AG04450 (cell line): ENCODE measurements at regions of chr2 and their contacts with region 1.

Region 1: DNA sequence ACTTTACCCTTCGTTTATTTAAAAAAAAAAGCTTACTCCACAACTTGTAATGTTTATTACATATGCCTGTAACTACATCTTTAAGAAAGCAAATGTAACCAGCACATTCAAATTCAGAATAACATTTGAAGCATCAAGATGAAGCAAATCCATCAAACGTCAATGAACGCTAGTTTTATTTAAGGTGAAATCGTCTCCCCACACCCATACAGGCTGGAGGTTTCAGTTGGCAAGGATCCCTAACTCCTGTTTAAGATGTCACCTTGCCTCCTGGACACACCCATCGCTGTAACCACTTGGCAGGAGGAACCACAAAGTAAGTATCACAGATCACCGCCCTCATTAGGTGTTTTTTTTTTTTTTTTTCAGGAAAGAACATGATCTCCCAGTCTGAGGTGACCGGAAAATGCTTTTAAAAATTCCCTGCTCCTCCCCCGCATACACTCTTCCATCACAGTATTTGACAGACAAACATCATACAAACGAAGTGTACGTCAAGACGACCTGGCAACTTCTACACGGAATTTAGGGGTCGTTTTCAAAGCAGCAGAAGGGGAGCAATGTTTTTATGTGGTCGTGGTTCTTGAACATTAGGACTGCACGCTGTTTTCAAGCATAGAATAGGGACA is 19.7 kb upstream of the STPG4 start:
- DNase-seq: no peak
- H3K4me3 ChIP-seq: peak overlapping the region; percentile 98
- H3K27ac ChIP-seq: peak overlapping the region; percentile 67
- H3K27me3 ChIP-seq: no peaks in the 10 kb centered on the region
- CTCF ChIP-seq: no peak

Region 2: GRCh38 chr2:46988733-46989481 is 185.9 kb before region 1 on chr2:
- CTCF ChIA-PET with region 1: interaction called, 16 read pairs
- POLR2A ChIA-PET with region 1: interaction called, 3 read pairs
- DNase-seq: no peak
- H3K4me3 ChIP-seq: no peak overlapping the region
- H3K27ac ChIP-seq: no peak overlapping the region
- H3K27me3 ChIP-seq: no peaks in the 10 kb centered on the region
- CTCF ChIP-seq: peak; percentile 14; the same call in 1 of the 2 replicates

Region 3: DNA sequence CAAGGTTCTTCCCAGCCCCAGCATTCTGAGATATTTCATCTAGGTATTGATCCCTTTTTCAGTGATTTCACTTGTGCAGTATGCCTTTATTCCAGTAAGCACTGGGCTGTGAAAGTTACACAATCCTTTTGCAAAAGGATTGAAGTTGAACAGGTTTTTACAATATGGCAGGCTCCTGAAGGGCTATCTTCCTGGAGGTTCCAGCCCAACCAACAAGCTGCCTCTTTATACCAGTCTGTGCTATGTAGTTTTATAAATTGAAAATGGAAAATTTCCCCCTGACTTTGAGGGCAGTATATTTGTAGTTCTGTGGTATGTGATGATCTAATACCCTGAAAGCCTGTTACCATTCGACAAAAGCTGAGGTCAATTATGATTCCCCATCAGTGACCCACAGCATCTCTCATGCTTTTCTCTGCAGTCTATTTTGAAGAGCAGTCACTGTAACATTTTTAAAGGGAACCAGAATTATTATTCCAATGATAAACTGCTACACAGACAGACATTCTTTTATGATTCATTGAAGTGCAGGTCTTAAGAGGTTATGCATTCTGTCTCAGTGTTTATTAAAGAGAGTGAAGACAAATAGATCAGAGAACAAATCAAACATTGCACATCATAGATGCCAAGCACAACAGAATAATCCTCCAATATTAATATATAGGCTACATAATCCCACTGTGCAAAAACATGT is 15.5 kb after region 1 on chr2:
- CTCF ChIA-PET with region 1: no interaction called
- POLR2A ChIA-PET with region 1: interaction called, 15 read pairs
- DNase-seq: no peak
- H3K4me3 ChIP-seq: no peak overlapping the region
- H3K27ac ChIP-seq: peak overlapping the region; percentile 86
- H3K27me3 ChIP-seq: no peaks in the 10 kb centered on the region
- CTCF ChIP-seq: no peak

Region 4: DNA sequence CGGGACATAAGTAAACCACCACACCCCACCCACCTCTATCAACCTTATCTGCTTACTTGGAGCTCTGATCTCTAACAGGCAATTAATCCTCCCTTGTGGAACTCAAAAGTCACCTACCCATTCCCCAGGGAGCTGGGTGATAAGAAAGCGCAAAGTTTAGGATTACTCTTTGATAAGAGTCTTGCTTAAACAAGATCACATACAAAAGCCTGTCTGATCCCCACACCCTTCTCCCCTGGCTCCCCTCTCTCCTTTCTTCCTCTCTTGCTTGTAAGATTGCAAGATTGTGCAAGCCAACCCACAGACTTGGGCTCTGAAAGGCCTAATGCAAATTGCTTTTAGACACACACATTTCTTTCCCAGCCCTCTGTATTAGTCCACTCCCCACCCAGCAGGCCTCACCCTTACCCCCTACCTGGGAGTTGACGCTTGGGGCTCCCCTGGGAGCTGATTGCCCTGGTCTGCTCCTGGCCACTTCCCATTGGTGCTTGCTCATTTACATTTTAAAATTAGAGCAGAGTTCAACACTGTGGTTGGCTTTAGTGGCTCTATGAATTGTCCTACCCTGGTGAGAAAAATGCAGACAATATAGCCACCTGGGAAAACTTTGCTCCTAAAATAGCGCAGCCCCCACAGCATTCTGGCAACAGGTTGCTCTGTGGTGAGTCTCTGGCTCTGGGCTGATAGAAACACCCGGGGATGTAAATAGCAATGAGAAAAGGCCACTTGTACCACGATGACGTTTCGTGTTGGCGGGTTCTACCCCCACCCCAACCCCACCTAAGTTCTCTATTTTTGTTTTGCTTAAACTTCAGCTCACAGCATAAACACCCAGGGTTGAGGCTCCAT is 135.3 kb after region 1 on chr2:
- CTCF ChIA-PET with region 1: interaction called, 10 read pairs
- POLR2A ChIA-PET with region 1: no interaction called
- DNase-seq: no peak
- H3K4me3 ChIP-seq: no peak overlapping the region
- H3K27ac ChIP-seq: no peak overlapping the region
- H3K27me3 ChIP-seq: no peaks in the 10 kb centered on the region
- CTCF ChIP-seq: no peak